ENCODE measurements at regions of chr3 and their contacts with region 1.

Region 1: DNA sequence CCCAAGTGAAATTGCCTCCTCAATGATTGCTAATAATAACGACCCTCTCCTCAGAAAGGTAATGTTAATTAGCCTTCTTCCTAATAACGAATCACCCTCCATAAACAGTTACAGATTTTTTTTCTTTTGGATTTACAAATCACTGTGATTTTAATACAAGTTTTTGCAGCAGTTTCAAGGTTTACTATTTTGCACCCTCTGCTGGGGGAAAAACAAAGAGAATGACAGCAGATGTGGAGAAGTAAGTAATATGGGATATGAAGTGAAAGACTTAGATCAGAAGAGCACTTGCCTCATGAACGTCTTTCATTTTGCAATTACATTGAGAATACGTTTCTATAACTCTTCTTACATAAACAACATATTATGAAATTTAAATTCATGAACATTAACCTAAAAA is 16.1 kb upstream of the CNTN3 start:
- DNase-seq: peak; percentile 42
- H3K4me3 Mint-ChIP-seq: no peak overlapping the region
- H3K27ac Mint-ChIP-seq: no peak overlapping the region
- H3K4me1 Mint-ChIP-seq: no peaks in the 10 kb centered on the region
- H3K27me3 Mint-ChIP-seq: no peaks in the 10 kb centered on the region
- CTCF ChIP-seq: no peak

Region 2: DNA sequence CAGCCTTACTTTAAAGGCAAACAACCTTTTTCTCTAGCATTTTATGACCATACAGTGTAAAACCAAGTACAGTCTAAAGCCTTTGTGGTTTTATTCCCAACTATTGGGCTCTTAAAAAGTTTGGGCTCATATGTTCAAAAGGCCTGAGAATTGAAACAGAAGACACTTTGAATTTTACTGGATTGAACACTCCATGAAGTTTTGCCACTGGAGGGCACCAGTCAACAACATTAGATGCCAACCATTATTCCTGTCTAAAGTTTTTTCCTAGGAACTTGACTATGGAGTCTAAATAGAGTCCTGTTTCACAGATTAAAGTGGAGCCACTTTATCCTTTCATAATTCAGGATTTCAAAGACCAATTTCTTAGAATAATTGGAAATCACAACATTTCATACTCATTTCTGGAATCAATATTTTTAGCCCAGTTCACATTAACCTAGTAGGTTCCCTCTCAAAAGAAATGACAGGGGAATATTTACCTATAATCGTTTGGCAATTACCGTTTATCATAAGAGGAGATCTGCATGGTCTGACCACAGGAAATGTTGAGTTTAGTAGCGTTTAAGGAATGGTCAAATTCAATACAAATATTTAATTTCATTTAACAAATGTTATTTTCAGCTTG is 761.8 kb before region 1 on chr3:
- CTCF ChIA-PET with region 1: no interaction called
- POLR2A ChIA-PET with region 1: no interaction called
- intact Hi-C with region 1: loop called (anchors 2 kb)
- DNase-seq: peak; percentile 54
- H3K4me3 Mint-ChIP-seq: no peak overlapping the region
- H3K27ac Mint-ChIP-seq: no peak overlapping the region
- H3K4me1 Mint-ChIP-seq: peaks cover 4% of the 10 kb centered on the region
- H3K27me3 Mint-ChIP-seq: peaks cover 11% of the 10 kb centered on the region
- CTCF ChIP-seq: peak; percentile 55

Region 3: GRCh38 chr3:74067296-74067695 is 563.3 kb before region 1 on chr3:
- CTCF ChIA-PET with region 1: no interaction called
- POLR2A ChIA-PET with region 1: no interaction called
- intact Hi-C with region 1: loop called (anchors 1 kb)
- DNase-seq: peak; percentile 23
- H3K4me3 Mint-ChIP-seq: no peak overlapping the region
- H3K27ac Mint-ChIP-seq: no peak overlapping the region
- H3K4me1 Mint-ChIP-seq: no peaks in the 10 kb centered on the region
- H3K27me3 Mint-ChIP-seq: peaks cover 23% of the 10 kb centered on the region
- CTCF ChIP-seq: peak; percentile 19

Region 4: GRCh38 chr3:74267588-74268184 is 362.9 kb before region 1 on chr3:
- CTCF ChIA-PET with region 1: no interaction called
- POLR2A ChIA-PET with region 1: no interaction called
- intact Hi-C with region 1: loop called (anchors 2 kb)
- DNase-seq: peak; percentile 51
- H3K4me3 Mint-ChIP-seq: no peak overlapping the region
- H3K27ac Mint-ChIP-seq: no peak overlapping the region
- H3K4me1 Mint-ChIP-seq: no peaks in the 10 kb centered on the region
- H3K27me3 Mint-ChIP-seq: no peaks in the 10 kb centered on the region
- CTCF ChIP-seq: peak; percentile 57

Region 5: GRCh38 chr3:74375653-74376052 is 254.9 kb before region 1 on chr3:
- CTCF ChIA-PET with region 1: no interaction called
- POLR2A ChIA-PET with region 1: no interaction called
- intact Hi-C with region 1: loop called (anchors 5 kb)
- DNase-seq: no peak
- H3K4me3 Mint-ChIP-seq: no peak overlapping the region
- H3K27ac Mint-ChIP-seq: no peak overlapping the region
- H3K4me1 Mint-ChIP-seq: no peaks in the 10 kb centered on the region
- H3K27me3 Mint-ChIP-seq: no peaks in the 10 kb centered on the region
- CTCF ChIP-seq: no peak

Region 6: GRCh38 chr3:74403307-74403706 is 227.3 kb before region 1 on chr3:
- CTCF ChIA-PET with region 1: no interaction called
- POLR2A ChIA-PET with region 1: no interaction called
- intact Hi-C with region 1: no loop called
- DNase-seq: no peak
- H3K4me3 Mint-ChIP-seq: no peak overlapping the region
- H3K27ac Mint-ChIP-seq: peak overlapping the region; percentile 4
- H3K4me1 Mint-ChIP-seq: no peaks in the 10 kb centered on the region
- H3K27me3 Mint-ChIP-seq: no peaks in the 10 kb centered on the region
- CTCF ChIP-seq: no peak

Region 7: GRCh38 chr3:74651292-74651691 is 20.7 kb after region 1 on chr3:
- CTCF ChIA-PET with region 1: no interaction called
- POLR2A ChIA-PET with region 1: no interaction called
- intact Hi-C with region 1: no loop called
- DNase-seq: no peak
- H3K4me3 Mint-ChIP-seq: no peak overlapping the region
- H3K27ac Mint-ChIP-seq: no peak overlapping the region
- H3K4me1 Mint-ChIP-seq: no peaks in the 10 kb centered on the region
- H3K27me3 Mint-ChIP-seq: no peaks in the 10 kb centered on the region
- CTCF ChIP-seq: no peak

Region 8: DNA sequence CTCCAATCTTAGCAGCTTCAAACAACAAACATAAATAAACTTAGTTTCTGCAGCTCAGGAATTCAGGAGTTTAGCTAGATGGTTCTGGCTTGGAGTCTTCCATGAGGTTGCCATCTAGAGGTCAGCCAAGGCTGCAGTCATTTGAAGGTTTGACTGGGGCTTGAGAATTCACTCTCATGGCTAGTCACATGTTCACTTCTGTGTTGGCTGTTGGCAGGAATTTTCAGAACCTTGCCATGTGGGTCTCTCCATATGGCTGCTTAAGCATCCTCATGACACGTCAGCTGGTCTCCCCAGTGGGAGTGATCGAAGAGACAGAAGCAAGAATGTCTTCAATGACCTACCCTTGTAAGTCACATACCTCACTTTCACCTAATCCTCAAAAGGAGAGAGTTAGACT is 253.1 kb after region 1 on chr3:
- CTCF ChIA-PET with region 1: no interaction called
- POLR2A ChIA-PET with region 1: no interaction called
- intact Hi-C with region 1: loop called (anchors 10 kb)
- DNase-seq: peak; percentile 26
- H3K4me3 Mint-ChIP-seq: no peak overlapping the region
- H3K27ac Mint-ChIP-seq: no peak overlapping the region
- H3K4me1 Mint-ChIP-seq: no peaks in the 10 kb centered on the region
- H3K27me3 Mint-ChIP-seq: no peaks in the 10 kb centered on the region
- CTCF ChIP-seq: peak; percentile 29

Measured in MCF 10A (cell line).